ENCODE measurements at regions of chr13 and their contacts with region 1.

Region 1: DNA sequence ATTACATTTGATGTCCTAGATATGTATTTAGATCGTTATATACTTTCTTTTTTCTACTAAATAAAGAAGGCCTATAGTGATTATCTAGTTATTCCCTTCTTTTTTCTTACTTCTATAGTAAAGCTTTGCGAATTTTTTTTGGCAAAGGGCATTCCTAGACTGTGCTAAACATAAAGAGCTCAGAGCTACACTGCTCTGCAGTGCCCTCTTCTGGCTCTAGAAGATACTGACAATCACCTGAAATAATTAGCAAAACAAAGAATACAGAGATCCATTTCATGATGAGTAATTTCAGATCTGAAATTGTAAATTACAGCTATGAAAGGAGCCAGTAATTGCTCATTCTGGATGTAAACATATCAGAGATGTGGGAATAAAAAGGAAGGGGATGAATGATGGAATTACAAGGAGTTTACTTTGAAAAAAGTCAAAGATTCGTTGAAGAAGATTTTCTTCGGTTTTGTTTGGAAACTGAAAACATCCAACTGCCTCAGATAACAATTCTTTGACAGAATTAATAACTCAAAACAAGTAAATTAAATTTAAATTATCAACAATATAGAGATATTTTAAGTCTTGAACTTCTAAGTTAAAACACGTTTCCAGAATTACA is 288.5 kb downstream of the NALCN start:
- DNase-seq: peak in 4 of 7 donors; percentile 13 to 35 (median 23)
- H3K4me3 ChIP-seq: no peak overlapping the region
- H3K27ac ChIP-seq: no peak overlapping the region
- H3K4me1 ChIP-seq: no peaks in the 10 kb centered on the region
- H3K27me3 ChIP-seq: no peaks in the 10 kb centered on the region
- CTCF ChIP-seq: peak; percentile 34 to 79 (median 56)
- POLR2A ChIP-seq: no peak

Region 2: DNA sequence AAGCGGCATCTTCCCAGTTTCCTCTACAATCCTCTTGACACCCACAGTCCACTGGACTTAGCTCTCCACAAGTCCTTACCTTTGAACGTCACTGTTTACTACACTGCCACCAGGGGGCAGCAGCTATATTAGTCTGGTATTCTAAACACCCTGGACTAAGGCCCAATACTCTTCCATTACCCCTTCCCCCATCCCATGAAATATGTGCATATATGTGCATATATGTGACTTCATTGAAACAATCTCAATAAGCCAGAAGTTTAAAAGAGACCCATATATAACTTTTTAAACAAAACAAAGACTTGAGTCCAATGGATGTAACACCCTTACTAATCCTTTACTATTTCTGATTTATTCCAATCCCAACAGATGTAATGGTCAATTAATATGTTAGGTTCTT is 554.7 kb before region 1 on chr13:
- intact Hi-C with region 1: loop called in 1 of 2 experiments (anchors 10 kb)
- DNase-seq: peak; percentile 68 to 90 (median 86)
- H3K4me3 ChIP-seq: no peak overlapping the region
- H3K27ac ChIP-seq: no peak overlapping the region
- H3K4me1 ChIP-seq: no peaks in the 10 kb centered on the region
- H3K27me3 ChIP-seq: no peaks in the 10 kb centered on the region
- CTCF ChIP-seq: peak; percentile 63 to 80 (median 72)
- POLR2A ChIP-seq: no peak

Region 3: GRCh38 chr13:100904293-100904976 is 223.4 kb before region 1 on chr13:
- intact Hi-C with region 1: no loop called
- DNase-seq: no peak
- H3K4me3 ChIP-seq: no peak overlapping the region
- H3K27ac ChIP-seq: no peak overlapping the region
- H3K4me1 ChIP-seq: no peaks in the 10 kb centered on the region
- H3K27me3 ChIP-seq: no peaks in the 10 kb centered on the region
- CTCF ChIP-seq: no peak
- POLR2A ChIP-seq: no peak

Region 4: GRCh38 chr13:101053301-101054093 is 74.3 kb before region 1 on chr13:
- intact Hi-C with region 1: no loop called
- DNase-seq: no peak
- H3K4me3 ChIP-seq: no peak overlapping the region
- H3K27ac ChIP-seq: peak overlapping the region in 1 of 5 donors; percentile 8
- H3K4me1 ChIP-seq: no peaks in the 10 kb centered on the region
- H3K27me3 ChIP-seq: no peaks in the 10 kb centered on the region
- CTCF ChIP-seq: no peak
- POLR2A ChIP-seq: no peak